Activated CD4-positive, alpha-beta memory T cell treated with anti-CD3 and anti-CD28 coated beads for 36 hours (primary cell): ENCODE measurements at regions of chr11 and their contacts with region 1.

Region 1: GRCh38 chr11:11960687-11961086 is 47.7 kb downstream of the DKK3 start:
- DNase-seq: peak; percentile 28
- H3K4me3 Mint-ChIP-seq: no peak overlapping the region
- H3K27ac Mint-ChIP-seq: peak overlapping the region; percentile 64
- H3K4me1 Mint-ChIP-seq: peaks cover 28% of the 10 kb centered on the region
- H3K27me3 Mint-ChIP-seq: no peaks in the 10 kb centered on the region

Region 2: GRCh38 chr11:11895672-11896071 is 65.0 kb before region 1 on chr11:
- CTCF ChIA-PET with region 1: no interaction called
- POLR2A ChIA-PET with region 1: no interaction called
- intact Hi-C with region 1: no loop called
- DNase-seq: no peak
- H3K4me3 Mint-ChIP-seq: no peak overlapping the region
- H3K27ac Mint-ChIP-seq: no peak overlapping the region
- H3K4me1 Mint-ChIP-seq: no peaks in the 10 kb centered on the region
- H3K27me3 Mint-ChIP-seq: no peaks in the 10 kb centered on the region

Region 3: DNA sequence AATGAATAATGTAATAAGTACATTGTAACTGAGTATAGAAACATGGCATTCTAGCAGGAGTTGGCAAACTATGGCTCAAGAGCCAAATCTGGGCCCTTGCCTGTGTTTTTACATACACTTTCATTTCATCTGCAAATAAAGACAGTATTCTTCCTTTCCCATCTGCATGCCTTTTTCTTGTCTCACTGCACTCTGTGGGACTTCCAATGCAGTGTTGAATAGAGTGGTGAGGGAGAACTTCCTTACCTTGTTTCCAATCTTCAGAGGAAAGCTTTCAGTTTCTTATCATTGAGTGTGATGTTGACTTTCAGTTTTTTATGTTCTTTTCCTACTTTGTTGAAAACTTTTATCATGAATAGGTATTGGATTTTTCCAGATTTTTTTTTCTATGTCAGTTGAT is 36.9 kb before region 1 on chr11:
- CTCF ChIA-PET with region 1: no interaction called
- POLR2A ChIA-PET with region 1: no interaction called
- intact Hi-C with region 1: no loop called
- DNase-seq: no peak
- H3K4me3 Mint-ChIP-seq: no peak overlapping the region
- H3K27ac Mint-ChIP-seq: no peak overlapping the region
- H3K4me1 Mint-ChIP-seq: peaks cover 12% of the 10 kb centered on the region
- H3K27me3 Mint-ChIP-seq: no peaks in the 10 kb centered on the region

Region 4: GRCh38 chr11:12008790-12009616 is 48.3 kb after region 1 on chr11:
- CTCF ChIA-PET with region 1: no interaction called
- POLR2A ChIA-PET with region 1: no interaction called
- intact Hi-C with region 1: no loop called
- DNase-seq: no peak
- H3K4me3 Mint-ChIP-seq: peak overlapping the region; percentile 48
- H3K27ac Mint-ChIP-seq: no peak overlapping the region
- H3K4me1 Mint-ChIP-seq: peaks cover 15% of the 10 kb centered on the region
- H3K27me3 Mint-ChIP-seq: peaks cover 65% of the 10 kb centered on the region

Region 5: GRCh38 chr11:12043959-12044819 is 83.5 kb after region 1 on chr11:
- CTCF ChIA-PET with region 1: interaction called, 20 read pairs
- POLR2A ChIA-PET with region 1: no interaction called
- intact Hi-C with region 1: no loop called
- DNase-seq: peak; percentile 76
- H3K4me3 Mint-ChIP-seq: no peak overlapping the region
- H3K27ac Mint-ChIP-seq: no peak overlapping the region
- H3K4me1 Mint-ChIP-seq: peaks cover 4% of the 10 kb centered on the region
- H3K27me3 Mint-ChIP-seq: peaks cover 1% of the 10 kb centered on the region